ENCODE measurements at regions of chr3 and their contacts with region 1.

Region 1: DNA sequence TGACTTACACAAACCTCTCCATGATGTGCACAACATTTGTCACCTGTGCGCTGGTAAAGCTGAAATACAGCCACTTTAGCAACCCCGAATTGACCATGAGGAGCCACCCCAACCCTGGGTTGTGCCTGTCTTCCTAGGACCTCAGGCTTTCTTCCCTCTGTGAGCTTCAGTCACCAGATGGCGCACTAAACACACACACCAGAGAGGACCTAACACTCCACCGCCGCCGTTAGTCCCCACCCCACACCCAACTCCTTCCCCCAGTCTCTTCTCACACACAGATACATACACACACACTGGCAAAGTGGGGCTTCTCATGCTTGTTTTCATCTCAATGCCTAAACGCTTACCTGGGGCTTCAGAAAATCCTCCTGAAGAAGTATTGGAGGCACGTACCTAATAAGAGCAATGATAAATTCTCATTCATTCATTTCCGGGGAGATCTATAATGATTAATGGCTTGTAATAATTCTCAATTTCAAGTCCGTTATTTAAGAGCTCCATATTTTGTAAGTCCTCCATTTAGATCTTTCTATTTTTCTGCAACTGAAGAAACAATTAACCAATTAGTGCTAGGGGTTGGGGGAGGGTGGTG is 2.1 kb upstream of the CCDC80 start:
- DNase-seq: peak; percentile 78 to 86 (median 84)
- ATAC-seq: peak; percentile 62 to 91 (median 90)
- H3K4me3 ChIP-seq: peak overlapping the region in 3 of 12 donors; percentile 29 to 36 (median 30)
- H3K27ac ChIP-seq: peak overlapping the region in 7 of 12 donors; percentile 2 to 86 (median 31)
- H3K4me1 ChIP-seq: peaks cover 0 to 44% (median 14%) of the 10 kb centered on the region in 12 donors
- H3K27me3 ChIP-seq: peaks cover 0 to 12% (median 0%) of the 10 kb centered on the region in 9 donors
- CTCF ChIP-seq: peak; percentile 56 to 89 (median 77)
- POLR2A ChIP-seq: no peak

Region 2: DNA sequence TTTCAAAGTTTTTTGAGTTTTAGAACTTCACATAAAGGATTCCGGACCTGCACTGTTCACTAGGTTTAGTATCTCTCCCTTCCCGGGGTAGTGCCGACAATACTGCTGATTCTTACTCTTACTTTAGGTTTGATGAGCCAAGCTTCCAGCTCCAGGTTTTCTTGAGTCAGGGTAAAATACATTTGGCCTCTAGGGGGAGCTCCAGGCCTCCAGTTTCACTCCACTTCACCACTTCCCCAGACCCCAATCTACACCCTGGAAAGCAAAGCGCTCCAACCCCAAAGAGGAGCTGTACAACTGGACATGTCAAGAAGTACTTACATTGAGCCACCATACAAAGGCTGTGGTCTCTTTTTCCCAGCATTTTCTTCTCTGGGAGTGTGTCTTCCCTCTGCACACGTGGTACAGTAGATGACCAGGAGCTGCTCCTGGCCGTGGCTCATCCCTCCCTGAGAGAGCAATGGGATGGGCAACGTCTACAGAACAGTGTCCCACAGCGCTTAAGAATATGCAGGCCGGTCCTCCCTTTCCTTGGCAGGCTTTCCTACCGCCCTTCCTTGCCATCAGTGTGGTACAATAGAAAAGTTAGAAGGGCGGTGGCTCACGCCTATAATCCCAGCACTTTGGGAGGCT is 91.8 kb after region 1 on chr3:
- intact Hi-C with region 1: loop called in 3 of 10 experiments (anchors 5 to 10 kb)
- DNase-seq: peak; percentile 35 to 51 (median 48)
- ATAC-seq: peak in 3 of 4 donors; percentile 51 to 76 (median 69)
- H3K4me3 ChIP-seq: no peak overlapping the region
- H3K27ac ChIP-seq: no peak overlapping the region
- H3K4me1 ChIP-seq: peaks cover 0 to 18% (median 0%) of the 10 kb centered on the region in 12 donors
- H3K27me3 ChIP-seq: no peaks in the 10 kb centered on the region
- CTCF ChIP-seq: peak; percentile 50 to 74 (median 62)
- POLR2A ChIP-seq: no peak

Region 3: DNA sequence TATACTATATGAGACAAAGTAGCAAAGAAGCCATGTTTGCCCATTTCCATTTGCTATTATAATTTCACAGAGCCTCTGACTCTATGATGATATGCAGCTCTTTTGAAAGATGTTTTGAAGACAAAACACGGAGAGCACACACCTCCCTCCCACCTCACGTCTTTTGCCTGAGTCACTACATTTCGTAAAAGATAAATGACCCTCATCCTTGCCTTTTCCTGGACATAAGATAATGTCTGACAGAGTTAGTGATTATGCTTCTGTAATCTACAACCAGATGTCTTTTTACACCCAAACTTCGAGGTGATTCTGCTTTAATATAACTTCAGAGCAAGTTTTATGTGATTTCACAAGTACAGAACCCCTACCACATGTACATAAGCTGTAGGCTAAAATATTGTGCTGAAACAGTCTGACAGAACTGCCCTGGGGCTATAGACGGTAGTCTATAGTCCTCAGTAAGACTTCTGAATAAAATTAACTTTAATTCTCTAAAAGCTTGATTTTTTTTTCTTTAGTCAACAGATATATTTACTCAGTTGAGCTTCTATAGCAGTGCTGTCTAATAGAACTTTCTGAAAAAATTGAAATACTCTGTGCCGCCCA is 103.8 kb after region 1 on chr3:
- intact Hi-C with region 1: loop called in 1 of 10 experiments (anchors 10 kb)
- DNase-seq: no peak
- ATAC-seq: peak in 1 of 4 donors; percentile 64
- H3K4me3 ChIP-seq: no peak overlapping the region
- H3K27ac ChIP-seq: peak overlapping the region in 2 of 12 donors; percentile 8 to 55
- H3K4me1 ChIP-seq: peaks cover 0 to 25% (median 12%) of the 10 kb centered on the region in 12 donors
- H3K27me3 ChIP-seq: no peaks in the 10 kb centered on the region
- CTCF ChIP-seq: no peak
- POLR2A ChIP-seq: no peak

Region 4: DNA sequence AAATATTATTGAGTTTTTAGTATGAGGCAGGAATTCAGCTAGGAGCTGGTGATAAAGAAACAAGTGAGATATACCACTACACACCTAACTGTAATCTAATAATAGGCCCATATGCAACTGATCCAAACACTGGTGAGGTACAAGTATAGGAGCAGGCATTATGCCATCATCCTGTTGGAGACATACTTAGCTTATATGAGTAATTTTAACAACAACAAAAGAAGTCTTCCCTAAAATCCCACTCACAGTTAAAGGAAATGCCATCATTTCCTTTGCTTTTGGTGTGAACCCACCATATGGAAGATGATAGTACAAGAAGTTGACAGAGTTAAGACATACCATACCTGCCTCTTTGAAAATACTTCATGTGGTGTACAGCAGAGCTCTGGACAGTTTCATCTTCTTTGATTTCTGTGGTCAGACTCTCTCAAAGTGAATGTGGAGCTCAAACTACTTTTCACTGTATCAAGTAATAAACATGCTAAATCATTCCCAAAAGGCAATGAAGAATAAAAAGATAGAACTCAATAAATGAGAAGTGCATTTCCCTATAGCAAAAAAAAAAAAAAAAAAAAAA is 118.1 kb after region 1 on chr3:
- intact Hi-C with region 1: no loop called
- DNase-seq: no peak
- ATAC-seq: no peak
- H3K4me3 ChIP-seq: no peak overlapping the region
- H3K27ac ChIP-seq: no peak overlapping the region
- H3K4me1 ChIP-seq: peaks cover 0 to 3% (median 0%) of the 10 kb centered on the region in 12 donors
- H3K27me3 ChIP-seq: no peaks in the 10 kb centered on the region
- CTCF ChIP-seq: no peak
- POLR2A ChIP-seq: no peak

Region 5: GRCh38 chr3:112814266-112814665 is 171.3 kb after region 1 on chr3:
- intact Hi-C with region 1: loop called in 9 of 10 experiments (anchors 1 to 5 kb)
- DNase-seq: no peak
- ATAC-seq: peak in 3 of 4 donors; percentile 40 to 55 (median 47)
- H3K4me3 ChIP-seq: no peak overlapping the region
- H3K27ac ChIP-seq: peak overlapping the region in 2 of 12 donors; percentile 62 to 81
- H3K4me1 ChIP-seq: peaks cover 0 to 49% (median 5%) of the 10 kb centered on the region in 12 donors
- H3K27me3 ChIP-seq: peaks cover 0 to 5% (median 0%) of the 10 kb centered on the region in 9 donors
- CTCF ChIP-seq: peak in 10 of 12 donors; percentile 13 to 60 (median 40)
- POLR2A ChIP-seq: no peak

Region 6: GRCh38 chr3:112979240-112979832 is 336.3 kb after region 1 on chr3:
- intact Hi-C with region 1: loop called (anchors 1 to 5 kb)
- DNase-seq: no peak
- ATAC-seq: no peak
- H3K4me3 ChIP-seq: no peak overlapping the region
- H3K27ac ChIP-seq: no peak overlapping the region
- H3K4me1 ChIP-seq: peaks cover 0 to 28% (median 0%) of the 10 kb centered on the region in 12 donors
- H3K27me3 ChIP-seq: no peaks in the 10 kb centered on the region
- CTCF ChIP-seq: peak; percentile 66 to 82 (median 73)
- POLR2A ChIP-seq: no peak

Region 7: GRCh38 chr3:112984485-112984884 is 341.5 kb after region 1 on chr3:
- intact Hi-C with region 1: loop called (anchors 1 to 5 kb)
- DNase-seq: no peak
- ATAC-seq: peak in 2 of 4 donors; percentile 28 to 47
- H3K4me3 ChIP-seq: no peak overlapping the region
- H3K27ac ChIP-seq: no peak overlapping the region
- H3K4me1 ChIP-seq: peaks cover 0 to 13% (median 2%) of the 10 kb centered on the region in 12 donors
- H3K27me3 ChIP-seq: no peaks in the 10 kb centered on the region
- CTCF ChIP-seq: no peak
- POLR2A ChIP-seq: no peak

Region 8: DNA sequence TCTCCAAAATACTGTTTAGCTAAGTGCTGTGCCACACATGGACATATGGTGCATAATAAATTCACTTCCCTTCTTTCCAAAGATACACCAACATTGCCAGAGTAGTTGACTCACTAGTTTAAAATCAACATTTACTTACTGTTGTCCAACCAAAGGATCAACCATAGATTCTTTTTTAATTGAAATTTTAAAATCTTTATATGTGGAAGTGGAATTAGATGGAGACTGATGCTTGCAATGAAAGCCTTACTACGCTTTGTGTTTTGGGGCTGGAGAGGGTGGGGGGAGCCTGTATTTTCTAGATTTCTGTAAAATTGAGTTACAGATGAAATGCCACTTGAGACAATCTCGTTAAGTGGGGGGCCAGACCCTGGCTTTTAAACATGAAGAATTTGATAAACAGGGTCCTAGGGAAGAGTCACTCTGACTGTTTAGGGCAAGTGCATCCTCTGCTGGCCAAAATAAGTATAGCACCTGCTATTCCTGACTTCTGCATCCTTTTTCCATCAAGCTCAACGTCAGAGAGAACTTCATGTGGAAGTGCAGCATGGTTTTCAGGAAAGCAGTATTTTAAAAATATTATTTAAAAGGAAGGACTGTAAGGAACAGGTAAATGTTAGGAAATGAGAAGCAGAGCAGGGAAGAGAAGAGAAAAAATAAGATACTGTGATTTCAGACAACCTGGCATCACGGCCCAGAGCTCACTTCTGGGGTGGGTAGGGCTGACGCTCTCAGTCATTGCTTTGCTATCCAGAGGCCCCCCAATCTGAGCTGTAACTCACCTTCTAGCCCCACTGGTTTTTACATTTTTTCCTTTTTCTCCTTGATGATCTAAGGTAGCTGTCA is 645.0 kb after region 1 on chr3:
- intact Hi-C with region 1: loop called in 2 of 10 experiments (anchors 5 to 10 kb)
- DNase-seq: peak in 2 of 5 donors; percentile 45
- ATAC-seq: peak in 3 of 4 donors; percentile 41 to 55 (median 43)
- H3K4me3 ChIP-seq: no peak overlapping the region
- H3K27ac ChIP-seq: peak overlapping the region in 1 of 12 donors; percentile 51
- H3K4me1 ChIP-seq: peaks cover 0 to 8% (median 0%) of the 10 kb centered on the region in 12 donors
- H3K27me3 ChIP-seq: no peaks in the 10 kb centered on the region
- CTCF ChIP-seq: peak; percentile 91 to 100 (median 98)
- POLR2A ChIP-seq: no peak

Measured in heart left ventricle (tissue), 16 donors.